Mammary epithelial cell (primary cell): ENCODE measurements at regions of chr17 and their contacts with region 1.

Region 1: DNA sequence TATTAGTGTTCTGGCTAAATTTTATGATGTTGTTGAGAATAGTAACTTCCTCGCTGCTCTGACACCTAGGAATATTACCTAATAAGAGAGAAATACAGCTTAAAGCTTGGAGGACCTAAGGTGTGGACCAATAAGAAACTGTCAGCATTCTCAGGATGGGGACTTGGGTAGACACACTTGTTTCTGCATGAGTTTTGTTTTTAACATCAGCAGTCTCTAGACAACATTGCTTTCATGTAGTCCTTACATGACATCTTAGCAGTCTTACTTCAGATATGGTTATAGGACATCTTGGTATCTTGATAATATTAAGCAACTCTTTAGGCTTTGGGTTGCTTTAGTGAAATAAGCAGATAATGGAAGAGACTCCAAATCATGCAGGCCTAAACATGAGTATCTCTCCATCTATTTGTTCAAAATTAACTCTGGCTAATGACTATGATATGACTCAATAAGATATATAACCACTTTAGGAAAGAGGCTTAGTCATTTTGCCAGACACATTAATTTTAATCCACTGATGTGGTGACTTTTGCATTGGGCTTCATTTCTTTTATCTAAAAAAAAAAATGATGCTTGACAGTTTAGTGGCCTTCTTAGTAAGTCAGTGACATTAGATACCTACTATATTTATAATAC is 84.5 kb downstream of the WNT3 start:
- DNase-seq: peak; percentile 79
- H3K4me3 ChIP-seq: no peak overlapping the region
- H3K27ac ChIP-seq: no peak overlapping the region
- H3K4me1 ChIP-seq: peaks cover 45% of the 10 kb centered on the region
- H3K27me3 ChIP-seq: no peaks in the 10 kb centered on the region
- CTCF ChIP-seq: no peak

Region 2: GRCh38 chr17:46764709-46765401 is 30.9 kb after region 1 on chr17:
- CTCF ChIA-PET with region 1: no interaction called
- dilution Hi-C with region 1: loop called (anchors 5 kb)
- in situ Hi-C with region 1: no loop called
- intact Hi-C with region 1: no loop called
- DNase-seq: peak; percentile 46
- H3K4me3 ChIP-seq: no peak overlapping the region
- H3K27ac ChIP-seq: no peak overlapping the region
- H3K4me1 ChIP-seq: peaks cover 15% of the 10 kb centered on the region
- H3K27me3 ChIP-seq: no peaks in the 10 kb centered on the region
- CTCF ChIP-seq: no peak